SK-N-SH (cell line): ENCODE measurements at regions of chr17 and their contacts with region 1.

Region 1: DNA sequence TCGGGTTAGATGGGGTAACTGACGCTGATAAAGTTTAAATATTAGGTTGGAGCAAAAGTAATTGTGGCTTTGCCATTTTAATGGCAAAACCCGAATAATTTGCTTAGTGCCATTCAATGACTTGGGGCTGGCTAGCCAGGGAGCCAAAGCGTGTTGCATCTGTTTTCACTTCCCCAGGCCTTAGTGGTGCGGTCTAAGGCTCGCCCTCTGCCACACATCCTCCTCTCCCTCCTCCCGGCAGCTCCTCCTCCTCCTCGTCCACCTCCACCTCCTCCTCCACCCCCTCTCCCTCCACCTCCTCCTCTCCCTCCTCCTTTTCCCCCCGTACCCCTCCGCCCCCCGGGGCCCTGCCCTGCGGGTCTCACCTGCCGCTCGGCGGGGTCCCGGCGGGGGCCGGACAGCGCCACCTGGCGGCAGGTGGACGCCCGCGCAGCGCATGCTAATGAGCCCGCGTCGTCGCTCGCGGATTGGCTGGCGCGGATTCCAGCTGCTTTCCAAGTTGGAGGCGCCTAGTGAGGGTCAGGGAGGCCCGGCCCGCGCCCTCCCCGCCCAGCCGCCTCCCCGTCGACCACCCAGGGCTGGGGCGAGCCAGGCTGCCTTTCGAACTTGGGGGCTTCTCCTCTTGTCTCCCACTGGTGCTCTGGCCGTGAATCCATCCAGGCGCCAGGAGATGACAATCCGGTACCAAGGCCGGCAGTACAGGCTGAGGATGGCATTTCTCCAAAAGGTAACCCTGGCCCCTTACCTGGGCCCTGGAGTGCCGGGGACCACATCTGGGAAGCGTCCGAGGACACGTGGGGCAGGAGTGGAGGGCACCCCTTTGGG is 36.6 kb upstream of the RGS9 start:
- DNase-seq: peak; percentile 96
- H3K4me3 ChIP-seq: peak overlapping the region; percentile 48 to 57
- H3K27ac ChIP-seq: peak overlapping the region in 1 of 2 experiments; percentile 7; a peak in 1 of 4 replicates
- H3K4me1 ChIP-seq: peaks cover 0 to 12% of the 10 kb centered on the region in 2 experiments; a peak in 1 of 4 replicates
- H3K27me3 ChIP-seq: no peaks in the 10 kb centered on the region
- CTCF ChIP-seq: peak; percentile 97
- EP300 ChIP-seq: no peak; a peak in 1 of 4 replicates
- RAD21 ChIP-seq: peak; percentile 72

Region 2: DNA sequence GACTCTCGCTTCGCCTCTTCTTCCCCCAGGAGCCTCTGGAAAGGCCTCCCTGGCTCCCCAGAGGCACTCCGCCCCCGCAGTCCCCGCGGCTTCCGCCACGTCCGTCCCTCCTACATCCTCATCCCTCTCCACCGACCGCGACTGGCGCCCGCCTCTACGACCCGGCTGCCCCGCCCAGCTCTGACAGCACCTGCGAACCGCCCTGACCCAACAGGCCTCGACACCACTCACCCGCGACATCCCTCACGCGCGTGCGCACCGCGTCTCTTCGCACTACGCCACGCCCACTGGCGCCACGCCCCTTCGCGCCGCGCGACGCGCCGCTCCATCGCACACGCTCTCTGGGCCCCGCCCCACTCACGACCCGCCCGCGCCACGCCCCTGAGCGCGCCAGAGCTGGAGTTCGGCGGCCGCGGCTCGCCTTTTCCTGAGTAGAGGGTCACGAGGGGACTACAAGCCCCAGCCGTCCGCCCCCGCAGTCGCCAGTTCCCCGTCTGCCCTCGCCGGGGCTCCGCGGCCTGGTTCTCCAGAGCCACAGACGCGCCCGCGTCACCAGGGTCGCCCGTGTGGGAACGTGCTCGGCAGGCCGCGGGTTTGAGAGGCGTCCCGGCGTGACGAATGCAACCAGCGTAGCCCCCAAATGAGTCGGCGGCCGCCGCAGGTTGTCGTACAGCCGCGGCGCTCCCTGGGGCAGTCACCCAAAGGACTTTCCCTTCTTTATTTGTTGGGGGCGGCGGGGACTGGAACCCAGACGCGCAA is 125.0 kb before region 1 on chr17:
- CTCF ChIA-PET with region 1: interaction called, 19 read pairs
- POLR2A ChIA-PET with region 1: interaction called, 4 read pairs
- DNase-seq: peak; percentile 99
- H3K4me3 ChIP-seq: peak overlapping the region; percentile 68 to 74
- H3K27ac ChIP-seq: peak overlapping the region; percentile 86 to 95
- H3K4me1 ChIP-seq: peaks cover 3 to 5% of the 10 kb centered on the region in 2 experiments; a peak in 1 of 4 replicates
- H3K27me3 ChIP-seq: no peaks in the 10 kb centered on the region
- CTCF ChIP-seq: no peak
- EP300 ChIP-seq: no peak; a peak in 1 of 4 replicates
- RAD21 ChIP-seq: no peak; the same call in 1 of the 2 replicates

Region 3: GRCh38 chr17:65055348-65056261 is 44.9 kb before region 1 on chr17:
- CTCF ChIA-PET with region 1: interaction called, 21 read pairs
- POLR2A ChIA-PET with region 1: interaction called, 3 read pairs
- DNase-seq: peak; percentile 83
- H3K4me3 ChIP-seq: peak overlapping the region; percentile 74 to 77
- H3K27ac ChIP-seq: peak overlapping the region; percentile 94 to 96
- H3K4me1 ChIP-seq: peaks cover 6 to 10% of the 10 kb centered on the region in 2 experiments; a peak in 2 of 4 replicates
- H3K27me3 ChIP-seq: no peaks in the 10 kb centered on the region
- CTCF ChIP-seq: no peak
- EP300 ChIP-seq: no peak
- RAD21 ChIP-seq: no peak

Region 4: DNA sequence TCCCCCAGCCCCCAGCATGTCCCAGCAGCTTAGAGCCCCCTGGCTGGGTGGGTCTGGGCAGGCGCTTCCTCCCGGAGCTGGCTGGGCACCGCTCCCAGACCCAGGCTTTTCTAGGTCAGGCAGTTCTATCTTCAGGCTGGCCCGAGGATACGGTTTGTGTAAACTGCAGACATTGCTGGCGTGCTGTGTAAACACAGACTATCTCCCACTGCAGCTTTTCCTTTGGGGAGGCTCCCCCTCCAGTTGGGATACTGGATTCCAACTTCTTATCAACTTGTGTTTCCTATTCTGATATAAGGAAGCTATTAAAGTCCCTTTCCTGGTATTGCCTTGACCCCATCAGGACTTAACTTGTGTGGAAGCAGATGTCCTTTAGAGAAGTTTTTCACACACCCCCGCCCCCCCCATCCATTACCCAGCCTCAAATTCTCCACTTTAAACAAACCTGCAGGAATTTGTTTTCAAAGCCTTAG is 25.7 kb before region 1 on chr17:
- CTCF ChIA-PET with region 1: interaction called, 49 read pairs
- POLR2A ChIA-PET with region 1: no interaction called
- DNase-seq: peak; percentile 91
- H3K4me3 ChIP-seq: no peak overlapping the region
- H3K27ac ChIP-seq: peak overlapping the region in 1 of 2 experiments; percentile 58; a peak in 2 of 4 replicates
- H3K4me1 ChIP-seq: peaks cover 9 to 13% of the 10 kb centered on the region in 2 experiments; a peak in 2 of 4 replicates
- H3K27me3 ChIP-seq: no peaks in the 10 kb centered on the region
- CTCF ChIP-seq: no peak
- EP300 ChIP-seq: no peak
- RAD21 ChIP-seq: peak; percentile 34

Region 5: GRCh38 chr17:65117384-65118035 is 17.0 kb after region 1 on chr17:
- CTCF ChIA-PET with region 1: interaction called, 13 read pairs
- POLR2A ChIA-PET with region 1: interaction called, 8 read pairs
- DNase-seq: no peak
- H3K4me3 ChIP-seq: no peak overlapping the region
- H3K27ac ChIP-seq: no peak overlapping the region
- H3K4me1 ChIP-seq: peaks cover 0 to 3% of the 10 kb centered on the region in 2 experiments; a peak in 1 of 4 replicates
- H3K27me3 ChIP-seq: no peaks in the 10 kb centered on the region
- CTCF ChIP-seq: no peak
- EP300 ChIP-seq: no peak
- RAD21 ChIP-seq: no peak

Region 6: GRCh38 chr17:65137021-65137991 is 36.8 kb after region 1 on chr17 and contains the start of gene RGS9:
- CTCF ChIA-PET with region 1: interaction called, 59 read pairs
- POLR2A ChIA-PET with region 1: no interaction called
- DNase-seq: peak; percentile 97
- H3K4me3 ChIP-seq: peak within 1 kb of the TSS; percentile 46 to 60
- H3K27ac ChIP-seq: no peak within 1 kb of the TSS; a peak in 1 of 4 replicates
- H3K4me1 ChIP-seq: peaks cover 3 to 16% of the 10 kb centered on the region in 2 experiments; a peak in 1 of 4 replicates
- H3K27me3 ChIP-seq: peaks cover 11% of the 10 kb centered on the region; the same call in 1 of the 2 replicates
- CTCF ChIP-seq: peak; percentile 99
- EP300 ChIP-seq: no peak
- RAD21 ChIP-seq: peak; percentile 71
- polyA plus RNA-seq, gene RGS9: 1.3 and 1.4 TPM in 2 replicates

Region 7: DNA sequence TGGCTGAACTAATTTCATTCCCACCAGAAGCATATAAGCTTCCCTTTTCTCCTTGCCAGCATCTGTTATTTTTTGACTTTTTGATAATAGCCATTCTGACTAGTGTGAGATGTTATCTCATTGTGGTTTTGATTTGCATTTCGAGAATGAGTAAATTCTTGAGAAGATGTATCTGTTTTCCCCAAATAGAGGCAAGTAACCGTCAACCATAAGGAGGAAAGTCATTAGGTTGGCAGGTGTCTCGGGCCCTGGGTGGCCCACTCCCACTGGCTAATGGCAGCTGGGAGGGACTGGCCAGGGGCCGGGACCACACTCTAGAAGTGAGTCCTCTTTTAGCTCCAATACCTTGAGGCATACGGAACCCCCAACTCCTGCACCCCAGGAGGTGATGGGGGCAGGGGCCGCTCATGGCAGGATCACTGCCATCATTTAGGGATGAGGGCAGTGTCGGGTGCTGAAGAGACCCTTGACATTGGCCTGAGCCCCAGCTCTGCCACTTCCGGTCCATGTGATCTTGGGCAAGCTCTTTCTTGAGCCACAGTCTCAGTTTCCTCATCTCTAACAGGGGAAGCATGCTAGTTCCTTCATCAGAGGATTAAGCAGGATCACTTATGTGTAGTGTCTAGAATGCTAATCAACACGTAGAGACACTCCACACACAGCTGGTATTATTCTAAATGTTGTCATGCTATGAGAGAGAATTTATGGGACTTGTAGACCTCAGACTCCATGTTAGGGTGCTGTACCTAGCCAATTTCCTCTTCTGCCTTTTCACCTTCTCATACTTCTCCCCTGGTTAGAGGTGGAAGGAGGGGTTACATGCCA is 80.9 kb after region 1 on chr17:
- CTCF ChIA-PET with region 1: interaction called, 12 read pairs
- POLR2A ChIA-PET with region 1: no interaction called
- DNase-seq: no peak
- H3K4me3 ChIP-seq: no peak overlapping the region
- H3K27ac ChIP-seq: peak overlapping the region; percentile 14 to 79; a peak in 2 of 4 replicates
- H3K4me1 ChIP-seq: peaks cover 34 to 54% of the 10 kb centered on the region in 2 experiments
- H3K27me3 ChIP-seq: no peaks in the 10 kb centered on the region
- CTCF ChIP-seq: no peak
- EP300 ChIP-seq: peak; percentile 78 to 97; a peak in 3 of 4 replicates
- RAD21 ChIP-seq: no peak